ENCODE measurements at regions of chr19 and their contacts with region 1.

Region 1: DNA sequence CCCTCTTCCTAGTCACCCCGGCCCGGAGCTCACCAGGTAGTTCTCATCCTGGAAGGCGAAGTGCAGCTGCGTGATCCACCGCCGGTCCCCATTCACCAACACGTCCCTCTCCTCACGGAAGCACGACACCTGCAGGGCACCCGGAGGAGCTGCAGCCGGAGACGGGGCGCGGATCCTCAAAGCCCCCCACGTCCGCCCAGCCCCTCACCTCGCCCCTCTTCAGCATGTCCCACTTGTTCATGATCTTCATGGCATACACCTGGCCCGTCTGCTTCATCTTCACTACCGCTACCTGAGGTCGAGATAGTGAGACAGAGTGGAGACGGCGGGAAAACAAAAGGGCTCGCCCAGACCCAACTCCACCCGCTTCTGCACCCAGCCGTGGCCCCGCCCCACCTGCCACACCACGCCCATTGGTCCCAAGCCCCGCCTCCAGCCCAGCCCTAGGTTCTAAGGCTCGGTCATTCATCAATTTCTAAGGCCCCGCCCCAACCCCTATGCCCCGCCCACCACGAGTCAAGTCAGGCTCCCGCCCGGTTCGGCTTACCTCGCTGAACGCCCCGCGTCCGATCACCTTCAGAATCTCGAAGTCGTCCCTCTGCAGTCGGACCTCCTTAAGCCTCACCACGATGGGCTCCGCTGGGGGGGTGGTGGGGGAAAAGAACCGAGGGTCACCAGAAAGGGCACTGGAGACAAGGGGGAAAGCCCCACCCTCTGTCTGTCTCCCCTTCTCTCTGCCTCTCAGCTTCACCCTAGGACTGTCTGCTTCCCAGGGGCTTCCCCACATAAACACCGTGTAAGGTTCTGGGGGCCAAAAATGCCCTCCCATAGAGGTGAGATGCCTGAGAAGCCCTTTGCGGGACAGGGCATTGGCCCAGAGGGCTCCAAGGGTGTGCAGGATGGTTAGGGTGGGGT is 2.8 kb downstream of the DMPK start:
- DNase-seq: peak; percentile 96
- ATAC-seq: peak; percentile 98
- H3K4me3 Mint-ChIP-seq: peak overlapping the region; percentile 63
- H3K27ac Mint-ChIP-seq: no peak overlapping the region
- H3K4me1 Mint-ChIP-seq: peaks cover 17% of the 10 kb centered on the region
- H3K27me3 Mint-ChIP-seq: peaks cover 29% of the 10 kb centered on the region
- CTCF ChIP-seq: peak; percentile 81

Region 2: DNA sequence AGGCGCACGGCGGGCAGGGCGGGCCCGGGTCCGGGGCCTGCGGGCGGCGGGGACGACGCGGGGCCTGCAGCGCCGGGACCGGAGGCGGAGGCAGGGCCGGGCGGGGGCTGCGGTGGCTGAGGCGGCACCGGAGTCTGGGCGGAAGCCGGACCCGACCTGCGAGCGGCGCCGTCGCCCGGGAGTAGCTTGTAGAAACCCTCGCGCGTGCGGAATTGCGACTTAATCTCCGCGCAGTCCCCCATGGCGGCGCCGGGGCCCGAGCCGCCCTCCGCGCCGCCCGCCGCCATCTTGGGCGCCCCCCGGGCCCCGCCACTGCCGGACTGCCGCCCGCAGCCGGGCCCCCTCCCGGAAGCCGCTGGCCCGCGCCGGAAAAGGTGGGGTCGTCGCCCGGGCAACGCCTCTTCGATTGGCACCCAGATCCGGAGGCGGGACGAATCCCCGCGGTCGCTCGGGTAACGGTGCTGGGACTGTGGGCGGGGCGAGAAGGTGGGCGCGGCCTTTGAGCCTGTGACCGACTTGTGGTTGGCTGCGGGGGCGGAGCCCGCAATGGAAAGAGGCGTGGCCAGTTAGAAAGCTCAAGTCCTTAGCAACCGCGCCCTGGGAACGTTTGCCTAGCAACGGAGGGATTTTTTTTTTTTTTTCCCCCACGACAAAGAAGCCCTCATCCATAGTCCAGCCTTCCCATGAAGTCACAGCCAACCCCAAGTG is 13.1 kb after region 1 on chr19 and contains the start of gene DMWD:
- CTCF ChIA-PET with region 1: interaction called, 124 read pairs
- POLR2A ChIA-PET with region 1: interaction called, 10 read pairs
- intact Hi-C with region 1: no loop called
- DNase-seq: peak; percentile 100
- ATAC-seq: peak; percentile 95
- H3K4me3 Mint-ChIP-seq: peak within 1 kb of the TSS; percentile 93
- H3K27ac Mint-ChIP-seq: peak within 1 kb of the TSS; percentile 87
- H3K4me1 Mint-ChIP-seq: peaks cover 28% of the 10 kb centered on the region
- H3K27me3 Mint-ChIP-seq: peaks cover 29% of the 10 kb centered on the region
- CTCF ChIP-seq: no peak
- total RNA-seq, gene DMWD: 23.5 to 26.0 TPM